ENCODE measurements at regions of chr14 and their contacts with region 1.

Region 1: GRCh38 chr14:94180655-94181271 is 6.6 kb downstream of the PPP4R4 start:
- DNase-seq: peak in 1 of 2 experiments; percentile 30
- H3K4me3 ChIP-seq: no peak overlapping the region
- H3K4me3 Mint-ChIP-seq: no peak overlapping the region
- H3K27ac Mint-ChIP-seq: no peak overlapping the region
- H3K4me1 ChIP-seq: no peaks in the 10 kb centered on the region
- H3K4me1 Mint-ChIP-seq: no peaks in the 10 kb centered on the region
- H3K27me3 ChIP-seq: no peaks in the 10 kb centered on the region
- H3K27me3 Mint-ChIP-seq: peaks cover 25% of the 10 kb centered on the region
- CTCF ChIP-seq: peak; percentile 22 to 59

Region 2: GRCh38 chr14:94307410-94307992 is 126.7 kb after region 1 on chr14:
- CTCF ChIA-PET with region 1: interaction called, 4 read pairs
- POLR2A ChIA-PET with region 1: no interaction called
- intact Hi-C with region 1: loop called (anchors 5 kb)
- DNase-seq: peak in 1 of 2 experiments; percentile 53
- H3K4me3 ChIP-seq: no peak overlapping the region
- H3K4me3 Mint-ChIP-seq: no peak overlapping the region
- H3K27ac Mint-ChIP-seq: no peak overlapping the region
- H3K4me1 ChIP-seq: no peaks in the 10 kb centered on the region; the same call in 1 of the 2 replicates
- H3K4me1 Mint-ChIP-seq: no peaks in the 10 kb centered on the region
- H3K27me3 ChIP-seq: no peaks in the 10 kb centered on the region
- H3K27me3 Mint-ChIP-seq: no peaks in the 10 kb centered on the region
- CTCF ChIP-seq: peak in 1 of 2 experiments; percentile 45